Endothelial cell of umbilical vein (primary cell): ENCODE measurements at regions of chr16 and their contacts with region 1.

Region 1: GRCh38 chr16:77971306-77972271 is 50.8 kb upstream of the CLEC3A start:
- DNase-seq: peak; percentile 52
- H3K4me3 ChIP-seq: no peak overlapping the region
- H3K27ac ChIP-seq: no peak overlapping the region
- H3K4me1 ChIP-seq: no peaks in the 10 kb centered on the region
- H3K27me3 ChIP-seq: no peaks in the 10 kb centered on the region
- CTCF ChIP-seq: peak; percentile 73 to 81
- POLR2A ChIP-seq: no peak

Region 2: DNA sequence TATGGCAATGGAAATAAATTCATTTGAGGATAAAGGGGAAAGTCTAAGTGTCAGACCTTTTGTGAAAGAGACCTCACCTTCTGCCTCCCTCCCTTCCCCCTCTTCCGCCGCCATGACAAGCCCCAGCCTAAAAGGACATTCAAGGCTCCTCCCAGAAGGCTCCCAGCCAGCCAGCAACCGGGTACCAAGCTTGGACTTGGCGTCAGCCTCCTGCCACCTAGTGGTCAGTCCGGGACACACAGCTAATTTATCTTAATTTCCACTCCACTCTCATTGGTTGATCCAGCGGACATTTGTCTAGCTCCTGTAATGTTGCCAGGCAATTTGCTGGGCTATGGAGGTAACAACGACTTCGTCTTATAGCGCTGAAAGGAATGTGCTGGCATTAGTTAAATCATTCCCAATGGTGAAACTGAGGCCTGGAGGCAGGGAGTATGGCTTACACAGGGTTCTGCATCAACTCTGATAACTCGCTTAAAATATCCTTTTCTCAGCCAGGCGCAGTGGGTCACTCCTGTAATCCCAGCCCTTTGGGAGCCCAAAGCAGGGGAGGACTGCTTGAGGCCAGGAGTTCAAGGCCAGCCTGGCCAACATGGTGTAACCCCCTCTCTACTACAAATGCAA is 31.4 kb after region 1 on chr16:
- CTCF ChIA-PET with region 1: interaction called, 11 read pairs
- POLR2A ChIA-PET with region 1: no interaction called
- dilution Hi-C with region 1: no loop called
- intact Hi-C with region 1: loop called (anchors 1 kb)
- DNase-seq: peak; percentile 88
- H3K4me3 ChIP-seq: no peak overlapping the region
- H3K27ac ChIP-seq: no peak overlapping the region
- H3K4me1 ChIP-seq: no peaks in the 10 kb centered on the region
- H3K27me3 ChIP-seq: no peaks in the 10 kb centered on the region
- CTCF ChIP-seq: peak; percentile 87 to 88
- POLR2A ChIP-seq: no peak